ENCODE measurements at regions of chr9 and their contacts with region 1.

Region 1: DNA sequence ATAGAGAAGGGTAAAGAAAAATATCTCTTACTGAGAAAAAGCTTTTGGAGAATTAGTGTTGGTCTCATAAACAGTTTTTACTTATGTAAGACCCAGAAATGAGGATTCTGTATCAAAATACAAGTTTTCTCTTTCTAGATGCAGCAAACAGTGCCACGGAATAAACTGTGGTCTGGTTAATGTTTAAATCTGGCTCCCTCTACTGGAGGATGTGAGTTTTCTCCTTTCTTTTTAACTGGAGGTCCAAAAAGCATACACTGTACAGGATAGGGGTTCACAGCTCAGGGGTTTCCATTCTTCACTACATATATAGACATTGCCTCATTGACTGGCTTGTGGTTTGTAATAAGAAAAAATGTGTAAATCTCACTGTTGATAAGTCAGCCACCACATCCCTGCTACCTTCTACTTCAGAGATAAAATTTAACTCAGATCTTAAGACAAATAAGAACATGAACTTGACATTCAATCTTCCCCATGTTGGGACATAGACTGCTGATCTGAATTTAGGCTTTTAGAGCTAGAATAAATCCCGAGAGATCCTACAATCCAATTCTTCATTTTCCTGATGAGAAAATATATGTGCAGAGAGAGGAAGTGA is 98.9 kb downstream of the CFAP95 start:
- DNase-seq: peak; percentile 66

Region 2: GRCh38 chr9:69444021-69444420 is 475.5 kb before region 1 on chr9:
- in situ Hi-C with region 1: loop called (anchors 25 kb)
- DNase-seq: no peak

Region 3: DNA sequence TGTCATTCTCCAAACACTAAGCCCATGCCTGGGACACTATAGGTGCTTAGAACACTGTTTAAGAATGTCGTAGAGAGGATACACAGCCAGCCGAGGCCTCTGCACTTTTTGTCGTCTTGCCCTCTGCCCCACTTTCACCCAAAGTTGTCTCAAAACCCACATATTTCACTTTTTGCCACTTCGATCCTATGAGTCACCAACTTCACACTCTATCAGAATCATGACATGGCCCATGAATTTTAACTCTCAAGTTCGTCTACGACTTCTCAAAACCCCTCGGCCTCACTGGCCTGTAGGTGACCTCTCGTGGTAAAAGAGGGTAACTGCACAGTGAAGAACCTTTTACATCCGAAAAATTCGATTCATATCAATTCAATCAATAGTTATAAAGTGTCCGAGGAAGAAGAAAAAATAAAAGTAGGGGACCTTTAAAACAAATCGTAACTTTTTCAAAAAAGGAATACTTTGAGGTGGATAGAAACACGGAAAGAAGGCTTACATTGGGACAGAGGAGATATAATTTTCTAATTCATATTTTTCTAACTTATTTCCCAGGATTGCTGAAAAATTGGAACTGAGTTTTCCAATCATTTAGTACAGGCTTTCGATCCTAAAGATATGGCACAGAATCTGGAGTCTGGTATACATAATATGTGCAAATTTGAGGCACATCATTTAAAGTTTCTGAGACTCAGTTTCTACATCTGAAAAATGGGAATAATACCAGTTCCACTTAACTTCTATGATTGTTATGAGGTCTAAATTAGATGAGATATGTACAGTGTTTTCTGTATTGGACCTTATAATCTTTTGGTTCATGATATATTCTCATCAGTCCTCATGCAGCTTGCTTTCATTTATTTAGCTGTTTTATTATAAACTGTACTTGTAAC is 370.0 kb before region 1 on chr9:
- in situ Hi-C with region 1: loop called (anchors 25 kb)
- DNase-seq: peak; percentile 39

Region 4: DNA sequence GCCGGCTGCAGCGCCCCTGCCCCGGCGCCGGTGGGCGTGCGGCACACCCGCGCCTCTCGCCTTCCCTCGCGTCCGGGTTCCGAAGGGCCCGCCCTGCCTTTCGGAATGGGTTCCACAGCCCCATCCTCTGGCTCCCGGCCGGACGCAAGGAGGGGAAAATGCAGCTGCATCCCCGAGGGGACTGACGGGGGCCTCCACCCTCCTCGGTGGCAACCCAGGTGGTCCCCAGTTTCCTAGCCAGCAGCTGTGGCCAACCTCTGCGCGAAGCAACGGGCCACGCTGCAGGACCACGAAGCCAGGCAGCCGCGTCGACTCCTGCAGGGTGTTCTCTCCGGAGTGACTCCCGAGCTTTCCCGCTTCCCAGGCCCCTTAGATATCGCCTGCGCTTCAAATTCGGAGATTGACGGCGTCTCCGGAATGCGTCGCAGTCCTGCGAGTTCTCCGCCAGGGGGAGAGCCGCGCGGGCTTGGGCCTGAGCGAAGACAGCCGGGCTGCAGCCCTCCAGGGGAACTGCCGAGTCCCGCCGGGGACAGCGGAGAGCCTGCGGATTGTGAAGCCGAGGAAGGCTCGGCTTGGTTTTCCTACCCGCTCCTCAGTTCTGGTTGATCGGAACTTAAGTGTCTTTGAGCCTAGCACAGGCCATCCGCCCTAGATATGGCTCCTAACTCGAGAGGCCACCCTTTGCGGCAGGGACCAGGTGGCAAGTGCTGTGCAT is 246.8 kb before region 1 on chr9:
- in situ Hi-C with region 1: loop called (anchors 25 kb)
- DNase-seq: peak; percentile 86

Measured in KBM-7 (cell line).